ENCODE measurements at regions of chr14 and their contacts with region 1.

Region 1: DNA sequence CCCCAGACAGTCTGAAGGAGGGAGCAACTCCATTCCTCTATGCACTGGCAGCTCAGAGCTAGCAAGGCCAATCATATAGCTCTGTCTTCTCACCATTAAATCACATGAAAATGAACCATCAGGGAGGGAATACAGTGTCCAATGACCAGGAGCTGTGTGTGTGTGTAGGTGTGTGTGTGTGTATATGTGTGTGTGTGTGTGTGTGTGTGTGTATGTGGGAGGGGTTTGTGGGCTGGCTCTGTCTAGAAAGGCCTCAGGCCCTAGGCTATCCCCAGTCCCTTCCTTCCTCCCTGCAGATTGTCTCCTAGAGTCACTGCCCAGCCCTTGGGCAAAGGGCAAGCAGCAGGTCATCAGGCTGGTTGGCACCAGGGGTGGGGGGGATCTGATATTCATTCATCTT is 5.7 kb upstream of the SUSD6 start:
- DNase-seq: no peak
- H3K4me3 ChIP-seq: no peak overlapping the region
- H3K27ac ChIP-seq: no peak overlapping the region
- H3K4me1 ChIP-seq: peaks cover 0 to 11% of the 10 kb centered on the region in 2 experiments; a peak in 1 of 4 replicates
- H3K27me3 ChIP-seq: no peaks in the 10 kb centered on the region
- CTCF ChIP-seq: no peak
- EP300 ChIP-seq: no peak
- RAD21 ChIP-seq: no peak

Region 2: DNA sequence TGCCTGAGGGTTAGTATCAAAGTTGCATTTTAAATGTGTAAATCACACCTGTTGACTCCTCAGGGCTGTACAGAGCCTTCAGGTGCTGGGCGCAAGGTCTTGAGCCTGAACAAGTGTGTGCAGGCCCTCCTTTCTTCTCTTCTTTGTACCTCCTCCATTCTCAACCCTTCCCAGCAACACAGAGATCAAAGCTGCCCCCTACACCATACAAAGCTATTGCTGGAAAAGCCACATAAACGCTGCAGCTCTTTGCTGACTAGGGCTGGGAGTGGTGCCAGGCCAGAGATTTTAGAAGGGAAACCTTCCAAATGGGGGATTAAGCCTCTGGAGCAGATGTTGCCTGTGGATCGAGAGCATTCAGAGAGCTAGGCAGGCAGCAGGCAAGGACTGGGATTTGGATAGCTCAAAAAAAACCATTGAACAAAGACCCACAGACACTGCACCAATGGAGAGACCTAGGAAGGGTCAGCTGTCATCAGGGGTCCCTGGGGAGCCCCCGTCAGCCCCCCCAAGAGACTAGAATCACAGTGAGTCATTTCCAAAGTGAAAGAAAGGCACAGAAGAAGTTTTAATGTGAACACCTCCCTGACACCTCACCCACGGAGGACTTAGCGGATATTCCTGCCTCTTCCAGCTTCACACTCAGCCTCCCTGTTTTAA is 12.6 kb before region 1 on chr14:
- CTCF ChIA-PET with region 1: interaction called, 23 read pairs
- POLR2A ChIA-PET with region 1: no interaction called
- DNase-seq: no peak
- H3K4me3 ChIP-seq: no peak overlapping the region
- H3K27ac ChIP-seq: no peak overlapping the region
- H3K4me1 ChIP-seq: peaks cover 0 to 3% of the 10 kb centered on the region in 2 experiments; a peak in 2 of 4 replicates
- H3K27me3 ChIP-seq: no peaks in the 10 kb centered on the region
- CTCF ChIP-seq: no peak
- EP300 ChIP-seq: no peak
- RAD21 ChIP-seq: no peak